ENCODE measurements at regions of chr12 and their contacts with region 1.

Region 1: GRCh38 chr12:63843721-63844390 is 644 bp upstream of the SRGAP1 start:
- DNase-seq: peak; percentile 92 to 97
- ATAC-seq: peak; percentile 90 to 93
- H3K4me3 ChIP-seq: peak overlapping the region; percentile 88
- H3K27ac ChIP-seq: peak overlapping the region; percentile 97 to 98
- H3K4me1 ChIP-seq: peaks cover 27% of the 10 kb centered on the region
- CTCF ChIP-seq: peak; percentile 98
- EP300 ChIP-seq: 0 out of 5 replicates have a peak, but pooled peaks of 1 of the 2 experiments have one; percentile 38
- POLR2A ChIP-seq: no peak
- RAD21 ChIP-seq: peak; percentile 97 to 99

Region 2: GRCh38 chr12:63753744-63754143 is 90.1 kb before region 1 on chr12:
- CTCF ChIA-PET with region 1: no interaction called
- POLR2A ChIA-PET with region 1: no interaction called
- DNase-seq: peak; percentile 12 to 22
- ATAC-seq: peak; percentile 66 to 89; a peak in 5 of 6 replicates
- H3K4me3 ChIP-seq: no peak overlapping the region
- H3K27ac ChIP-seq: no peak overlapping the region
- H3K4me1 ChIP-seq: no peaks in the 10 kb centered on the region
- CTCF ChIP-seq: 0 out of 3 replicates have a peak, but pooled peaks have one; percentile 12
- EP300 ChIP-seq: no peak
- POLR2A ChIP-seq: no peak
- RAD21 ChIP-seq: peak in 1 of 2 experiments; percentile 27; a peak in 1 of 5 replicates

Region 3: GRCh38 chr12:63888908-63889635 is 45.2 kb after region 1 on chr12:
- CTCF ChIA-PET with region 1: interaction called, 27 read pairs
- POLR2A ChIA-PET with region 1: interaction called, 4 read pairs
- DNase-seq: peak; percentile 39 to 43
- ATAC-seq: peak; percentile 69 to 79
- H3K4me3 ChIP-seq: peak overlapping the region; percentile 2; the same call in 1 of the 3 replicates
- H3K27ac ChIP-seq: peak overlapping the region; percentile 86 to 92
- H3K4me1 ChIP-seq: peaks cover 71% of the 10 kb centered on the region
- CTCF ChIP-seq: no peak
- EP300 ChIP-seq: no peak
- POLR2A ChIP-seq: no peak
- RAD21 ChIP-seq: no peak

Region 4: GRCh38 chr12:63978519-63978918 is 134.7 kb after region 1 on chr12:
- CTCF ChIA-PET with region 1: interaction called, 18 read pairs
- POLR2A ChIA-PET with region 1: no interaction called
- DNase-seq: peak; percentile 26 to 59
- ATAC-seq: peak; percentile 59 to 67; a peak in 5 of 6 replicates
- H3K4me3 ChIP-seq: no peak overlapping the region
- H3K27ac ChIP-seq: peak overlapping the region in 1 of 2 experiments; percentile 46; a peak in 2 of 6 replicates
- H3K4me1 ChIP-seq: peaks cover 47% of the 10 kb centered on the region
- CTCF ChIP-seq: no peak
- EP300 ChIP-seq: peak in 1 of 2 experiments; percentile 28; a peak in 2 of 5 replicates
- POLR2A ChIP-seq: no peak
- RAD21 ChIP-seq: no peak

Region 5: GRCh38 chr12:64077922-64078321 is 234.1 kb after region 1 on chr12:
- CTCF ChIA-PET with region 1: interaction called, 43 read pairs
- POLR2A ChIA-PET with region 1: interaction called, 3 read pairs
- DNase-seq: peak; percentile 10 to 34
- ATAC-seq: peak; percentile 66 to 77; a peak in 5 of 6 replicates
- H3K4me3 ChIP-seq: no peak overlapping the region
- H3K27ac ChIP-seq: no peak overlapping the region
- H3K4me1 ChIP-seq: peaks cover 37% of the 10 kb centered on the region
- CTCF ChIP-seq: peak; percentile 25; the same call in 1 of the 3 replicates
- EP300 ChIP-seq: no peak
- POLR2A ChIP-seq: no peak
- RAD21 ChIP-seq: 0 out of 5 replicates have a peak, but pooled peaks of 1 of the 2 experiments have one; percentile 14

Region 6: GRCh38 chr12:64175252-64175945 is 331.5 kb after region 1 on chr12:
- CTCF ChIA-PET with region 1: interaction called, 48 read pairs
- POLR2A ChIA-PET with region 1: no interaction called
- DNase-seq: peak in 1 of 2 experiments; percentile 33
- ATAC-seq: no peak
- H3K4me3 ChIP-seq: no peak overlapping the region
- H3K27ac ChIP-seq: no peak overlapping the region
- H3K4me1 ChIP-seq: peaks cover 24% of the 10 kb centered on the region
- CTCF ChIP-seq: no peak
- EP300 ChIP-seq: no peak
- POLR2A ChIP-seq: no peak
- RAD21 ChIP-seq: no peak

Region 7: DNA sequence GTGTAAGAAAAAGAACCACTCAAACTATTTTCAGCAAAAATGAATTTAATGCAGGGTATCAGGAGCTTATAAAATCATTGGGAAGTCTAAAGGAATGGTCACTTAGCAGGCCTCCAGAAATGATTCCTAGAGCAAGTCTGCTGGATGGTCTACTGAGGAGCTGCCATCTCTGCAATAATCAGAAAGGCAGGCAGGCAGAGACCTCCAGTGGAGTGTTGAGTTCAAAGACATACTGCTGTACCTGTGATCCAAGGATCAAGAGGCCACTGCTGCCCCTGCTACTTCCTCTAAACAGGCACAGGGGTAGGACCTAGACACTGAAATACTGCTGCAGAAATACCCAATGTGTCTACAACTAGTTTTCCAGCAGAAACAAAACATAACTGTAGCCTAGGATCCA is 392.7 kb after region 1 on chr12:
- CTCF ChIA-PET with region 1: interaction called, 39 read pairs
- POLR2A ChIA-PET with region 1: no interaction called
- DNase-seq: peak in 1 of 2 experiments; percentile 29
- ATAC-seq: peak; percentile 68 to 78; a peak in 5 of 6 replicates
- H3K4me3 ChIP-seq: no peak overlapping the region
- H3K27ac ChIP-seq: no peak overlapping the region
- H3K4me1 ChIP-seq: no peaks in the 10 kb centered on the region
- CTCF ChIP-seq: no peak
- EP300 ChIP-seq: no peak
- POLR2A ChIP-seq: no peak
- RAD21 ChIP-seq: peak; percentile 49 to 62; a peak in 4 of 5 replicates

Measured in A549 (cell line).